ENCODE measurements at regions of chr1 and their contacts with region 1.

Region 1: GRCh38 chr1:244864253-244865027 is at the start of gene HNRNPU:
- DNase-seq: peak; percentile 95 to 98 (median 97)
- H3K4me3 ChIP-seq: peak within 1 kb of the TSS; percentile 72 to 99 (median 90)
- H3K27ac ChIP-seq: peak within 1 kb of the TSS; percentile 98 to 100 (median 100)
- H3K4me1 ChIP-seq: peaks cover 22 to 32% of the 10 kb centered on the region in 2 donors
- H3K27me3 ChIP-seq: no peaks in the 10 kb centered on the region
- CTCF ChIP-seq: peak in 5 of 6 experiments; percentile 32 to 61 (median 59)
- POLR2A ChIP-seq: peak; percentile 96 to 99
- total RNA-seq, gene HNRNPU: 192 to 326 (median 273) TPM

Region 2: GRCh38 chr1:244699741-244700140 is 164.7 kb before region 1 on chr1:
- intact Hi-C with region 1: no loop called
- DNase-seq: no peak
- H3K4me3 ChIP-seq: no peak overlapping the region
- H3K27ac ChIP-seq: no peak overlapping the region
- H3K4me1 ChIP-seq: no peaks in the 10 kb centered on the region
- H3K27me3 ChIP-seq: no peaks in the 10 kb centered on the region
- CTCF ChIP-seq: no peak
- POLR2A ChIP-seq: no peak

Region 3: GRCh38 chr1:244970661-244971551 is 106.5 kb after region 1 on chr1:
- intact Hi-C with region 1: loop called in 1 of 2 experiments (anchors 10 kb)
- DNase-seq: peak; percentile 93 to 97 (median 95)
- H3K4me3 ChIP-seq: peak overlapping the region; percentile 3 to 93 (median 56)
- H3K27ac ChIP-seq: peak overlapping the region; percentile 88 to 100 (median 99)
- H3K4me1 ChIP-seq: peaks cover 11 to 19% of the 10 kb centered on the region in 2 donors
- H3K27me3 ChIP-seq: no peaks in the 10 kb centered on the region
- CTCF ChIP-seq: peak; percentile 16 to 80 (median 66)
- POLR2A ChIP-seq: peak; percentile 78 to 82

Measured in adrenal gland (tissue), 19 donors.